Heart left ventricle (tissue), 16 donors: ENCODE measurements at regions of chr13 and their contacts with region 1.

Region 1: DNA sequence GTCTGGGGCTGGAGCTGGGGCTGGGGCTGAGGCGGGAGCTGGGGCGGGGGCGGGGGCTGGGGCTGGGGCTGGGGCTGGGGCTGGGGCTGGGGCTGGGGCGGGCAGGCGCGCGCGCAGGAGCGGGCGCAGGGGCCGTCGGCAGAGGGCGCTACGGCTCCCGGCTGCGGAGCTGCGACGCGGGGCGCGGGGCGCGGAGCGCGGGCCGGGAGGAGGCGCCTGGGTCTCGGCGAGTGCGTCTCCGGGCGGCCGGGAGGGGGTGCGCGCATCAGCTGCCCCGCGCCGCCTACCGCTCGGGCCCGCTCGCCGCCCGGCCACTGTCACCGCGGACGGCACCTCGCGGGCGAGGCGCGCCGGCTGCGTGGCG is 422 bp upstream of the MTUS2 start:
- DNase-seq: peak; percentile 55 to 81 (median 71)
- ATAC-seq: peak in 3 of 4 donors; percentile 85 to 94 (median 94)
- H3K4me3 ChIP-seq: peak overlapping the region in 11 of 12 donors; percentile 8 to 79 (median 60)
- H3K27ac ChIP-seq: peak overlapping the region in 1 of 12 donors; percentile 42
- H3K4me1 ChIP-seq: peaks cover 0 to 16% (median 8%) of the 10 kb centered on the region in 12 donors
- H3K27me3 ChIP-seq: peaks cover 0 to 55% (median 15%) of the 10 kb centered on the region in 9 donors
- CTCF ChIP-seq: peak in 8 of 12 donors; percentile 29 to 56 (median 42)
- POLR2A ChIP-seq: no peak

Region 2: GRCh38 chr13:28173793-28174192 is 645.9 kb before region 1 on chr13:
- intact Hi-C with region 1: no loop called
- DNase-seq: no peak
- ATAC-seq: no peak
- H3K4me3 ChIP-seq: no peak overlapping the region
- H3K27ac ChIP-seq: no peak overlapping the region
- H3K4me1 ChIP-seq: peaks cover 0 to 3% (median 0%) of the 10 kb centered on the region in 12 donors
- H3K27me3 ChIP-seq: no peaks in the 10 kb centered on the region
- CTCF ChIP-seq: no peak
- POLR2A ChIP-seq: no peak

Region 3: DNA sequence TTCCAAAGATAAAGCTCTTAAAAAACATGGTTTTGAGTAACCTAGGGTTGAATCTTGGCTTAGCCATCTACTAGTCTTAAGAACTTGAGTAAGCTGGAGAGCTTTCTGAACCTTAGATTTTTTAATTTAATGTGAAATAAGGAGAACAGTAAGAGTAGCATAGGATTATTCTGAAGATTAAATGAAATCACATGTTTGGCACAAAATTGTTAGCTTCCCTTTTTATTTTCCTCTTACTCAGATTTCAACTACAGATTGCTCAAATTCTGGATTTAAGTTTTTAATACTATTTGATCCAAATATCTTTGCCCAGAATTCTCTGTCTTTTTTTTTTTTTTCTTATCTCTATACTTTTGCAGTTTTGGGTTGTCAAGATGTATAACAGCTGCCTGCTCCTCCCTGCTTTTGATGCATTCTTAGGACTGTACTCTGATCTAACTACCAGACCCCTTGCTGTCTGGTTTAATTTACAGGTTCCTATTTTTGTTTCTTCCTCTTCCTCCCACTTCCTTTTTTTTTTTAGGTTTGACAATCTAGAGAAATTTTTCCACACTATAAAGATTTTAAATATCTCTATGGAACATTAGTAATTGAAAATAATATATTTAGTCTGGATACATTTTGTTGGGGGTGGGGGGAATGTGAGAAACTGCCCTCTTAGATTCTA is 148.5 kb before region 1 on chr13:
- intact Hi-C with region 1: no loop called
- DNase-seq: no peak
- ATAC-seq: no peak
- H3K4me3 ChIP-seq: no peak overlapping the region
- H3K27ac ChIP-seq: peak overlapping the region in 2 of 12 donors; percentile 18 to 74
- H3K4me1 ChIP-seq: peaks cover 0 to 26% (median 0%) of the 10 kb centered on the region in 12 donors
- H3K27me3 ChIP-seq: no peaks in the 10 kb centered on the region
- CTCF ChIP-seq: no peak
- POLR2A ChIP-seq: no peak

Region 4: GRCh38 chr13:28718543-28719226 is 101.0 kb before region 1 on chr13 and contains the start of gene SLC46A3:
- intact Hi-C with region 1: no loop called
- DNase-seq: peak; percentile 99 to 100 (median 100)
- ATAC-seq: peak; percentile 98 to 99 (median 98)
- H3K4me3 ChIP-seq: peak within 1 kb of the TSS; percentile 54 to 87 (median 77)
- H3K27ac ChIP-seq: peak within 1 kb of the TSS; percentile 87 to 100 (median 98)
- H3K4me1 ChIP-seq: peaks cover 0 to 36% (median 29%) of the 10 kb centered on the region in 12 donors
- H3K27me3 ChIP-seq: no peaks in the 10 kb centered on the region
- CTCF ChIP-seq: peak in 5 of 12 donors; percentile 6 to 34 (median 20)
- POLR2A ChIP-seq: peak; percentile 40 to 78
- total RNA-seq, gene SLC46A3: 11.5 to 18.1 (median 16.2) TPM

Region 5: GRCh38 chr13:28953714-28954418 is 134.1 kb after region 1 on chr13:
- intact Hi-C with region 1: loop called in 6 of 10 experiments (anchors 2 to 10 kb)
- DNase-seq: no peak
- ATAC-seq: no peak
- H3K4me3 ChIP-seq: no peak overlapping the region
- H3K27ac ChIP-seq: peak overlapping the region in 10 of 12 donors; percentile 15 to 89 (median 73)
- H3K4me1 ChIP-seq: peaks cover 0 to 25% (median 1%) of the 10 kb centered on the region in 12 donors
- H3K27me3 ChIP-seq: no peaks in the 10 kb centered on the region
- CTCF ChIP-seq: no peak
- POLR2A ChIP-seq: no peak

Region 6: DNA sequence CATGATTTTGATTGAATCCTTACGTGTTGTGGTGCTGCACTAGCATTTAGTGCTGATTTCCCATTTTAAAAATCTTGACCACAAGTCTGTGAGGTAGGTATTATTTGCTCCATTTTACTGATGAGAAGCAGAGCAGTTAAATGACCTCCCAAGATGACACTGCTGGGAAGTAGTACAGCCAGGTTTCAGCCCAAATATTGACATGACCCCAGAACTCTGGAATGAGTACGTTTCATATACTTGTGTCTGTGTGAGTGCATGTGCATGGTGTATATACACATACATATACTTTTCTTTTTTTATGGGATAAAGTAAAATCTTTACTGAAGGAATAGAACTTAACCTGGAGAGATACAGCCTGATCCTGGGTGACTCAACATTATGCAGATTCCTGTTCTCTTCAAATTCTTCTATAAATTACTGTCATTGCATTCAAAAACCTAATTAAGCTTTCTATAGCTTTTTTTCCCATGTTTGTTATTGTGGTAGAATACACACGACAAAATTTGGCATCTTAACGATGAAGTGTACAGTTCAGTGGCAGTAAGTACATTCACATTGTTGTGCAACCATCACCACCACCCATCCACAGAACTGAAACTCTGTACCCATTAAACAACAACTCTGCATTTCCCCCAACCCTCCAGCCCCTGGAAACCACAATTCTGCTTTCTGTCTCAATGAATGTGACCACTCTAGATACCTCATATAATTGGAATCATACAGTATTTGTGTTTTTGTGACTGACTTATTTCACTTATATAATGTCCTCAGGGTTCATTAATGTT is 312.4 kb after region 1 on chr13:
- intact Hi-C with region 1: loop called in 1 of 10 experiments (anchors 10 kb)
- DNase-seq: no peak
- ATAC-seq: no peak
- H3K4me3 ChIP-seq: no peak overlapping the region
- H3K27ac ChIP-seq: no peak overlapping the region
- H3K4me1 ChIP-seq: peaks cover 0 to 5% (median 0%) of the 10 kb centered on the region in 12 donors
- H3K27me3 ChIP-seq: no peaks in the 10 kb centered on the region
- CTCF ChIP-seq: no peak
- POLR2A ChIP-seq: no peak

Region 7: DNA sequence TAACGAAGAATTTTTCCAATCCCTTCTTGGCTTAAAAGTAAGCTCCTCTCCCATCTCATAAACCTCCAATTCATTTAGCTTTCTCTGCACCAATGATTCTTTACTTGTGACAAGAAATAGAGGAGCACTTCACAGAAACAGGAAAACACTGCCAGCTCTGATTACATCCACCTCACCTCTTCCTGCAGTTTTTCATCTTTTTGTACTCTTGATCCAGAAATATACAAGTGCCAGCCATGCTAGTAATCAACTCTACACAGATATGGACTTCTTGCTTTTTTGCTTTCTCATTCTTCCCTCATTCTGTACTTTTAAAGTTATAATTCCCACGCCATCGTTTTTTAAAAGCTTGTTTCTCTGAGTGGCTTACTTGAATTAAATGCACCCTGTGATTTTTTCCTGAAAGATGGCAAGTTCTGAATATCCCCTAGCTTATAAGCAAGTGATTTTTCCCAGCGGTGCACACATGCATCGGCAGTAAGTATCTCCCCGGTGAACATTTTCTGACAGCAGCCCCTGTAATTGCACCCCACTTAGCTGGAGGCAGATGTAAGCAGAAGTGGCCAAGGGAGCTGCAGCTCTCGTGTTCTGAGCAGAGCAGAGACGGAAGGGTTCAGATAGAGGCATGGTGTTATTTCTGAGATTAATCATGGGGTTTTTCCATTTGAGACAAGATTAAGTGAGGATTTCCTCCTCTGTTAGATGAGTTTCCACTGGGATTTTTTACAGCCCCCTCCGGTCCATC is 435.1 kb after region 1 on chr13:
- intact Hi-C with region 1: loop called in 1 of 10 experiments (anchors 10 kb)
- DNase-seq: no peak
- ATAC-seq: no peak
- H3K4me3 ChIP-seq: no peak overlapping the region
- H3K27ac ChIP-seq: no peak overlapping the region
- H3K4me1 ChIP-seq: peaks cover 0 to under 1% (median 0%) of the 10 kb centered on the region in 12 donors
- H3K27me3 ChIP-seq: no peaks in the 10 kb centered on the region
- CTCF ChIP-seq: no peak
- POLR2A ChIP-seq: no peak

Region 8: GRCh38 chr13:29260683-29261082 is 441.0 kb after region 1 on chr13:
- intact Hi-C with region 1: loop called in 9 of 10 experiments (anchors 2 to 10 kb)
- DNase-seq: no peak
- ATAC-seq: peak; percentile 56 to 87 (median 83)
- H3K4me3 ChIP-seq: no peak overlapping the region
- H3K27ac ChIP-seq: no peak overlapping the region
- H3K4me1 ChIP-seq: peaks cover 0 to 3% (median 0%) of the 10 kb centered on the region in 12 donors
- H3K27me3 ChIP-seq: no peaks in the 10 kb centered on the region
- CTCF ChIP-seq: peak in 10 of 12 donors; percentile 16 to 52 (median 39)
- POLR2A ChIP-seq: no peak

Region 9: DNA sequence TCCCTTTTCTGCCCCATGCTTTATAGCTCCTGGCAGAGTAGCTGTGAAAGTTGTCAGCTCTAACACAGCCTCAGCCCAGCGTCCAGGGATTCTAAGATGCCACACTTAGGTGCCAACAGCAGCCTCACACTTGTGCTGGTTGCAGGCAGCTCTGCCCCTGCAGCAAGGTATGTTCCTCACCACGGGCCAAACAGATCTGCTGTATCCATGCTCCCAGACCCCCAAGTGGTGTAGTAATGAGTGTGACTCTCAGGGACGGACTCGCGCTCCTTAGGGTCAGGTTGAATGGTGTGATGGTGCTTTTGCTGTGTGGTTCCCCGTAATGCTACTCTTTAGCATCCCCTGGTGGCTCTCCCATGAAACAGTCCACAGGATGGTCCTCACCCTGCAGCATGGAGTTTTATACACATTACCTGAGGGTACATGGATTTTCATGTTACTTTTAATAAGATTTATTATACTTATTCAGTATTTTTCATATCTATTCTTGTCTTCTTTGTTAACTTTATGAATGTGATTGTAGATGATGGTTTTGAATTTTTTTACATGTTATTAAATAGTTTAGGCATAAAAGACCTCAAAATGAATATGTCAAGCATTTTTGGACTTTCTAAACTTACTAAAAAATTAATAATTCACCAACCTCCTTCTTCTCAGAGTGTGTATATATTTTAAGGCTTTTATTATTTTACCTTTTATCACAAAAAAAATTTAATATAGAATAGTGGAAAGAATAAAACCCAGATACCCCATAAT is 543.3 kb after region 1 on chr13:
- intact Hi-C with region 1: loop called in 7 of 10 experiments (anchors 5 to 10 kb)
- DNase-seq: peak in 2 of 5 donors; percentile 15 to 27
- ATAC-seq: peak; percentile 74 to 91 (median 84)
- H3K4me3 ChIP-seq: no peak overlapping the region
- H3K27ac ChIP-seq: no peak overlapping the region
- H3K4me1 ChIP-seq: no peaks in the 10 kb centered on the region
- H3K27me3 ChIP-seq: no peaks in the 10 kb centered on the region
- CTCF ChIP-seq: peak; percentile 61 to 86 (median 79)
- POLR2A ChIP-seq: no peak

Region 10: GRCh38 chr13:29369060-29369743 is 549.5 kb after region 1 on chr13:
- intact Hi-C with region 1: loop called in 7 of 10 experiments (anchors 5 to 10 kb)
- DNase-seq: no peak
- ATAC-seq: peak in 2 of 4 donors; percentile 45 to 50
- H3K4me3 ChIP-seq: no peak overlapping the region
- H3K27ac ChIP-seq: no peak overlapping the region
- H3K4me1 ChIP-seq: peaks cover 0 to 5% (median 0%) of the 10 kb centered on the region in 12 donors
- H3K27me3 ChIP-seq: peaks cover 0 to 5% (median 0%) of the 10 kb centered on the region in 9 donors
- CTCF ChIP-seq: peak; percentile 9 to 58 (median 40)
- POLR2A ChIP-seq: no peak